ENCODE measurements at regions of chr2 and their contacts with region 1.

Region 1: GRCh38 chr2:102141970-102142828 is at the start of gene IL1R1:
- DNase-seq: peak; percentile 87 to 92 (median 89)
- ATAC-seq: peak; percentile 80 to 96 (median 92)
- H3K4me3 ChIP-seq: peak within 1 kb of the TSS; percentile 52 to 90 (median 76)
- H3K27ac ChIP-seq: peak within 1 kb of the TSS; percentile 82 to 96 (median 92)
- H3K4me1 ChIP-seq: peaks cover 0 to 41% (median 14%) of the 10 kb centered on the region in 12 donors
- H3K27me3 ChIP-seq: no peaks in the 10 kb centered on the region
- CTCF ChIP-seq: peak in 3 of 12 donors; percentile 2 to 22 (median 11)
- POLR2A ChIP-seq: peak in 1 of 2 donors; percentile 78
- total RNA-seq, gene IL1R1: 10.9 to 49.0 (median 19.6) TPM

Region 2: DNA sequence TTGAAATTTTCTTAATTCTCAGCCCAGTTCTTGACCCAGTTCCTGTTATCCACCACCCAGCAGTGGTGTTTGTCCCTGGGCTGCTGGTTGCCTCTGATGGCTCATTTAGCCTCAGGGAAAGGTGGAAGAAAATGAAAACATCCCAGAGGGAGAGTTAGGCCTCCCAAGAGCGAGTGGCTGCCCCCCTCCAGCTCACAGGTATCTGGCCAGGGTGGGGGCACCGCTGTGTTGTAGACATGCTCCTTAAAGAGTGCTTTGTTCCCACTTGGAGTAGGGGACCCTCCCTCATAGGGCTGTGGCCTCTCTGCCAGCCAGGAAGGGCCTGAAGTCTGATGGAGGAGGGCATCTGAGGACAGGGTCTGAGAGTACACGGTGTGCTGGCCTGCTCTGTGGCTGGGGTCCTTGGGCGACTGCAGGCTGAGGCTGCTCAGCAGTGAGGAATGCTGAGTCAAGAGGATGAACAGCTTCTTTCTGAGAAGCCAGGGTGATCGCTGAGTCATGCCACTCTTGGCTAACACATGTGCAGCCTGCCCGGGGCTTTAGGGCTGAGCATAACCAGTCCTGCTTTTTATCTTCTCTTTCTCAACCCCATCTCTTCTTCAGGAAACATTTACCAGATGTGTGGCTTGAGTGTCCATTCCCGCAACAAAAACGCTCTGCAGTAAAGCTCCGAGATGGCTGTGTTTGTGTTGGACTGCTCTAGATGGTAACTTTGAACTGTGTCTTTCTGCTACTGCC is 78.1 kb before region 1 on chr2:
- intact Hi-C with region 1: loop called in 2 of 10 experiments (anchors 5 kb)
- DNase-seq: peak; percentile 80 to 95 (median 87)
- ATAC-seq: peak; percentile 85 to 94 (median 92)
- H3K4me3 ChIP-seq: peak overlapping the region in 3 of 12 donors; percentile 11 to 12 (median 11)
- H3K27ac ChIP-seq: peak overlapping the region; percentile 77 to 97 (median 90)
- H3K4me1 ChIP-seq: peaks cover 0 to 79% (median 52%) of the 10 kb centered on the region in 12 donors
- H3K27me3 ChIP-seq: no peaks in the 10 kb centered on the region
- CTCF ChIP-seq: no peak
- POLR2A ChIP-seq: no peak

Region 3: DNA sequence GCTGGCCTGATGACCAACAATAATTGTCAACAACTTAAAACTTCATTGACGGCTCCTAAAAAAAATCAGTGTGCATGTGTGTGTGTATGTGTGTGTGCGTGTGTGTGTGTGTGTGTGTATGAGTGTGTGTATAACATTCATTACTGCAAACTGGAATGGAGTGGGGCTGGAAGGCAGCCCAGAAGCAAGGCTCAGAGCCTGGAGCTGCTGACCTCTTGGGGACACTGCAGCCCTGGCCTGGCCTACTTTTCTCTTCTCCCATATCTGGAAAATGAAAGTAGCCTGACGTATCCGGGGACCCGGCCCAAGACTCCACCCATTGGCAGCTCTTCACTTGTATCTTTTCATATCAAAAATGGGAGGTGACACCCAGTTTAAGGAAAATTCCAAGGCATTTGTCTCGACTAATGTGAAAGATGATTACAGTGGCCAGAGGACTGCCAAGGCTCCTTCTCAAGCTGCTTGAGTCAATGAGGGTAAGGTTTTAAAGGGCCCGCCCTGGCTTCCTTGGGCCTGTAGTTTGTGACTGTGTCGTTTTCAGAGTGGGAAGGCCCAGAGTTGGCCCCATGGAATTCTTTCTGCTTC is 72.0 kb before region 1 on chr2:
- intact Hi-C with region 1: loop called in 1 of 10 experiments (anchors 5 kb)
- DNase-seq: peak; percentile 90 to 95 (median 92)
- ATAC-seq: peak; percentile 94 to 98 (median 96)
- H3K4me3 ChIP-seq: peak overlapping the region in 8 of 12 donors; percentile 0 to 38 (median 18)
- H3K27ac ChIP-seq: peak overlapping the region; percentile 36 to 86 (median 74)
- H3K4me1 ChIP-seq: peaks cover 0 to 41% (median 26%) of the 10 kb centered on the region in 12 donors
- H3K27me3 ChIP-seq: no peaks in the 10 kb centered on the region
- CTCF ChIP-seq: peak in 6 of 12 donors; percentile 17 to 42 (median 34)
- POLR2A ChIP-seq: peak in 1 of 2 donors; percentile 22

Region 4: DNA sequence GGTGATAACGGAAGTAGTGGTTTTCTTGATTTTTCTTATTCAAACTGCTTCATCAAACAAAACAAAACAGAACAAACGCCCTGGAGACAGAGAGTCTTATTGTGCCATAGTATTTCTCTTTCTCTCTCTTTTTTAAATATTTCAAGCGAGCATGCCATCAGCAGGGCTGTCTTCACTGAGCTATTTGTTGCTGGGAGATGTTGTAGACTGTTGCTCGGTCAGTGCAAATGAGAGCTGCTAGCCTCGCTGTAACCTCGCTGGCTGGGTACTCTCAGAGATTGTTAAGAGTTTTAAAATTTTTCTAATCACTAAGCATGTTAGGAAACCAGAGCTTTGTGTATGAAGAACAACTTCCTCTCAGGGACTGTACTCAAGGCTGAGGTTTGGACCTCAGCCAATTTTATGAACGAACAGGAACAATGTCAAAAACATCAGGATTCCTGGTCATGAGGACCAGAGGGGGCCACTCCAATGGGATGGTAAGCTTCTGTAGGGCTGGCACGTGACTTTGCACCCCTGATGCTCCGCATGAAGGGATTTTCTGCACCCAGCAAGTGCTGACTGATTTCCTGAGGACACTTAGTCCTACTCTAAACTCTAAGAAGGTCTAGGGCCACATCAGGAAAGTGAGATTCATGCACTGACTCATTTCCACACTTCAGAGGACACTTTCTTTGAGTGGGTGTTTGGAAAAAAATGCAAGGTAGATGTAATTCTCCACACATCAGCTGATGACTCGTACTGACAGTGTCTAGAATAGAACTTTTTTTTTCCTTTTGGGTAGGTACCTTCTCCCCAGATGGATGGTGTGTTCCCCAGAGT is 59.4 kb before region 1 on chr2:
- intact Hi-C with region 1: loop called in 1 of 10 experiments (anchors 5 kb)
- DNase-seq: peak in 3 of 5 donors; percentile 41 to 45 (median 45)
- ATAC-seq: peak; percentile 87 to 93 (median 91)
- H3K4me3 ChIP-seq: peak overlapping the region in 4 of 12 donors; percentile 15 to 25 (median 18)
- H3K27ac ChIP-seq: peak overlapping the region in 10 of 12 donors; percentile 22 to 80 (median 60)
- H3K4me1 ChIP-seq: peaks cover 0 to 26% (median 7%) of the 10 kb centered on the region in 12 donors
- H3K27me3 ChIP-seq: no peaks in the 10 kb centered on the region
- CTCF ChIP-seq: no peak
- POLR2A ChIP-seq: no peak

Region 5: GRCh38 chr2:102103992-102104871 is 38.0 kb before region 1 on chr2:
- intact Hi-C with region 1: no loop called
- DNase-seq: peak in 4 of 5 donors; percentile 52 to 82 (median 64)
- ATAC-seq: peak; percentile 60 to 89 (median 83)
- H3K4me3 ChIP-seq: peak overlapping the region; percentile 5 to 60 (median 42)
- H3K27ac ChIP-seq: peak overlapping the region; percentile 11 to 74 (median 67)
- H3K4me1 ChIP-seq: peaks cover 0 to 21% (median 6%) of the 10 kb centered on the region in 12 donors
- H3K27me3 ChIP-seq: no peaks in the 10 kb centered on the region
- CTCF ChIP-seq: no peak
- POLR2A ChIP-seq: no peak

Region 6: GRCh38 chr2:102114290-102114721 is 27.9 kb before region 1 on chr2:
- intact Hi-C with region 1: no loop called
- DNase-seq: no peak
- ATAC-seq: no peak
- H3K4me3 ChIP-seq: no peak overlapping the region
- H3K27ac ChIP-seq: no peak overlapping the region
- H3K4me1 ChIP-seq: peaks cover 0 to 35% (median 8%) of the 10 kb centered on the region in 12 donors
- H3K27me3 ChIP-seq: no peaks in the 10 kb centered on the region
- CTCF ChIP-seq: no peak
- POLR2A ChIP-seq: no peak

Region 7: DNA sequence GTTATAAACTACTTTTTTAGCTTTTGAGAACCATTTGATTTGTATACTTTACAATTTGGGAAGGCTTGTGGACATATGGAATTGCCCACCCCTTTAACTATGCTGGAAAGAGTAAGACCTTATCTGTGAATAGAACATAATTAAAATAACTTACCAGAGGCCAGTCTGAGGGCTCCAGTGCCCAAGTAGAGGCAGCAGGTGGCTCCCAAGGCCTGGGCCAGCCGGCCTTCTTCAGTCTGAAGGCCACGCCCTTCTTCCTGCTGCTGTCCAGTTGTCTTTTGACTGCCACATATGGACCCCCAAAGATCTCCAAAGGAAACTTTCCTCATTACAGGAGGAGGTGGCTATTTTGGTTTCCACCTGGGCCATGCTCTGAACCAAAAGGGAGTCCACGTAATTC is 268.8 kb after region 1 on chr2:
- intact Hi-C with region 1: no loop called
- DNase-seq: no peak
- ATAC-seq: no peak
- H3K4me3 ChIP-seq: no peak overlapping the region
- H3K27ac ChIP-seq: no peak overlapping the region
- H3K4me1 ChIP-seq: no peaks in the 10 kb centered on the region
- H3K27me3 ChIP-seq: no peaks in the 10 kb centered on the region
- CTCF ChIP-seq: no peak
- POLR2A ChIP-seq: no peak

Measured in heart left ventricle (tissue), 16 donors.